ENCODE measurements at regions of chr20 and their contacts with region 1.

Region 1: GRCh38 chr20:34312544-34313217 is 9.5 kb upstream of the AHCY start:
- DNase-seq: peak; percentile 94
- ATAC-seq: peak; percentile 100
- H3K4me3 Mint-ChIP-seq: no peak overlapping the region
- H3K27ac Mint-ChIP-seq: no peak overlapping the region
- H3K4me1 Mint-ChIP-seq: peaks cover 4% of the 10 kb centered on the region
- H3K27me3 Mint-ChIP-seq: peaks cover 14% of the 10 kb centered on the region
- CTCF ChIP-seq: peak; percentile 100

Region 2: GRCh38 chr20:34222208-34222607 is 90.5 kb before region 1 on chr20:
- CTCF ChIA-PET with region 1: no interaction called
- POLR2A ChIA-PET with region 1: no interaction called
- intact Hi-C with region 1: no loop called
- DNase-seq: no peak
- ATAC-seq: no peak
- H3K4me3 Mint-ChIP-seq: no peak overlapping the region
- H3K27ac Mint-ChIP-seq: no peak overlapping the region
- H3K4me1 Mint-ChIP-seq: no peaks in the 10 kb centered on the region
- H3K27me3 Mint-ChIP-seq: peaks cover 20% of the 10 kb centered on the region
- CTCF ChIP-seq: no peak

Region 3: GRCh38 chr20:34260208-34260942 is 52.3 kb before region 1 on chr20:
- CTCF ChIA-PET with region 1: interaction called, 10 read pairs
- POLR2A ChIA-PET with region 1: no interaction called
- intact Hi-C with region 1: no loop called
- DNase-seq: no peak
- ATAC-seq: no peak
- H3K4me3 Mint-ChIP-seq: no peak overlapping the region
- H3K27ac Mint-ChIP-seq: no peak overlapping the region
- H3K4me1 Mint-ChIP-seq: no peaks in the 10 kb centered on the region
- H3K27me3 Mint-ChIP-seq: no peaks in the 10 kb centered on the region
- CTCF ChIP-seq: no peak

Region 4: GRCh38 chr20:34377072-34377847 is 64.6 kb after region 1 on chr20:
- CTCF ChIA-PET with region 1: interaction called, 11 read pairs
- POLR2A ChIA-PET with region 1: no interaction called
- intact Hi-C with region 1: no loop called
- DNase-seq: peak; percentile 9
- ATAC-seq: peak; percentile 7
- H3K4me3 Mint-ChIP-seq: no peak overlapping the region
- H3K27ac Mint-ChIP-seq: peak overlapping the region; percentile 52
- H3K4me1 Mint-ChIP-seq: peaks cover 25% of the 10 kb centered on the region
- H3K27me3 Mint-ChIP-seq: no peaks in the 10 kb centered on the region
- CTCF ChIP-seq: no peak

Region 5: DNA sequence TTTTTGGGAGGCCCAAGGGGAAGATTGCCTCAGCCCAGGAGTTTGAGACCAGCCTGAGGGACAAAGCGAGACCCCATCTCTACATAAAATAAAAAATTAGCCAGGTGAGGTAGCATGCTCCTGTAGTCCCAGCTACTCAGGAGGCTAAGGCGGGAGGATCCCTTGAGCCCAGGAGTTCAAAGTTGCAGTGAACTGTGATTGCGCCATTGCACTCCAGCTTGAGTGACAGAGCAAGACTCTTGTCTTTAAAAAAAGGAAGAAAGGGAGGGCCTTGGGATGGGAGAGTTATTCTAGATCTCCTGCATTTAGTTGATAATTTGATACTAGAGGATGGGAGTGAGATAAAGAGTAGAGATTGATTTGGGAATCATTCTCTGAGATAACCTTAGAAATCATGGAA is 118.5 kb after region 1 on chr20:
- CTCF ChIA-PET with region 1: interaction called, 38 read pairs
- POLR2A ChIA-PET with region 1: no interaction called
- intact Hi-C with region 1: no loop called
- DNase-seq: no peak
- ATAC-seq: no peak
- H3K4me3 Mint-ChIP-seq: no peak overlapping the region
- H3K27ac Mint-ChIP-seq: no peak overlapping the region
- H3K4me1 Mint-ChIP-seq: peaks cover 4% of the 10 kb centered on the region
- H3K27me3 Mint-ChIP-seq: no peaks in the 10 kb centered on the region
- CTCF ChIP-seq: no peak

Region 6: DNA sequence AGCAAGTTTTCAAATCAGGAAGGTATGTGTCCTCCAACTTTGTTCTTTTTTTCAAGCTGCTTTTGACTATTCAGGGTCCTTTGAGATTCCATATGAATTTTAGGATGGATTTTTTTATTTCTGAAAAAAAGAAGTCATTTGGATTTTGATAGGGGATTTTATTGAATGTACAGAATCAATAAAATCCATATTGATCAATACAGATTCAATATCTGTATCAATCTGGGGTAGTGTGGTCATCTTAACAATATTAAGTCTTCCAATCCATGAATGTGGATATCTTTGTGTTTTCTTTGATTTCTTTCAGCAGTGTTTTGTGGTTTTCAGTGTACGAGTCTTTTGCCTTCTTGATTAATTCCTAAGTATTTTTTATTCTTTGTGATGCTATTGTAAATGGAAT is 152.6 kb after region 1 on chr20:
- CTCF ChIA-PET with region 1: interaction called, 31 read pairs
- POLR2A ChIA-PET with region 1: no interaction called
- intact Hi-C with region 1: no loop called
- DNase-seq: no peak
- ATAC-seq: no peak
- H3K4me3 Mint-ChIP-seq: no peak overlapping the region
- H3K27ac Mint-ChIP-seq: no peak overlapping the region
- H3K4me1 Mint-ChIP-seq: no peaks in the 10 kb centered on the region
- H3K27me3 Mint-ChIP-seq: no peaks in the 10 kb centered on the region
- CTCF ChIP-seq: no peak

Region 7: DNA sequence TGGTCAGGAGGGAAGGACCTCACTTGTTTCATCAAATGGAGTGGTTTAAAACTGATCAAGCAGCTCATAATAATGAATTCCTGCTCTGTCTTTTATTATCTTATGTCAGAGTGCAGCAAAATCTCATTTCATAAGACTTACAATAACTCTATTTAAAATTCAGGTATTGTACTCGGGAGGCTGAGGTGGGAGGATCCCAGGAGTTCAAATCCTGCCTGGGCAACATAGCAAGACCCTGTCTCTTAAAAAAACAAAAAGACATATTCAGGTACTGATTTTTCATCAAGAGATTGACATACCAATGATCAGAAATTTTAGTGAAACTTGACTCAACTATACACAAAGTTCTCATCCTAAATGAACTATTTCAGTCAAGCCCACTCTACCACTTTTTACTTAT is 197.9 kb after region 1 on chr20:
- CTCF ChIA-PET with region 1: interaction called, 114 read pairs
- POLR2A ChIA-PET with region 1: interaction called, 3 read pairs
- intact Hi-C with region 1: no loop called
- DNase-seq: no peak
- ATAC-seq: no peak
- H3K4me3 Mint-ChIP-seq: no peak overlapping the region
- H3K27ac Mint-ChIP-seq: no peak overlapping the region
- H3K4me1 Mint-ChIP-seq: peaks cover 18% of the 10 kb centered on the region
- H3K27me3 Mint-ChIP-seq: no peaks in the 10 kb centered on the region
- CTCF ChIP-seq: no peak

Region 8: GRCh38 chr20:34538671-34539123 is 226.0 kb after region 1 on chr20:
- CTCF ChIA-PET with region 1: interaction called, 17 read pairs
- POLR2A ChIA-PET with region 1: no interaction called
- intact Hi-C with region 1: no loop called
- DNase-seq: peak; percentile 72
- ATAC-seq: peak; percentile 85
- H3K4me3 Mint-ChIP-seq: no peak overlapping the region
- H3K27ac Mint-ChIP-seq: no peak overlapping the region
- H3K4me1 Mint-ChIP-seq: peaks cover 7% of the 10 kb centered on the region
- H3K27me3 Mint-ChIP-seq: no peaks in the 10 kb centered on the region
- CTCF ChIP-seq: peak; percentile 83

Region 9: GRCh38 chr20:34621383-34622367 is 309.0 kb after region 1 on chr20:
- CTCF ChIA-PET with region 1: no interaction called
- POLR2A ChIA-PET with region 1: no interaction called
- intact Hi-C with region 1: no loop called
- DNase-seq: no peak
- ATAC-seq: no peak
- H3K4me3 Mint-ChIP-seq: no peak overlapping the region
- H3K27ac Mint-ChIP-seq: peak overlapping the region; percentile 11
- H3K4me1 Mint-ChIP-seq: peaks cover 12% of the 10 kb centered on the region
- H3K27me3 Mint-ChIP-seq: no peaks in the 10 kb centered on the region
- CTCF ChIP-seq: no peak